Activated B cell treated with CpG ODN at 0.5 μM for 24 hours (primary cell): ENCODE measurements at regions of chr5 and their contacts with region 1.

Region 1: DNA sequence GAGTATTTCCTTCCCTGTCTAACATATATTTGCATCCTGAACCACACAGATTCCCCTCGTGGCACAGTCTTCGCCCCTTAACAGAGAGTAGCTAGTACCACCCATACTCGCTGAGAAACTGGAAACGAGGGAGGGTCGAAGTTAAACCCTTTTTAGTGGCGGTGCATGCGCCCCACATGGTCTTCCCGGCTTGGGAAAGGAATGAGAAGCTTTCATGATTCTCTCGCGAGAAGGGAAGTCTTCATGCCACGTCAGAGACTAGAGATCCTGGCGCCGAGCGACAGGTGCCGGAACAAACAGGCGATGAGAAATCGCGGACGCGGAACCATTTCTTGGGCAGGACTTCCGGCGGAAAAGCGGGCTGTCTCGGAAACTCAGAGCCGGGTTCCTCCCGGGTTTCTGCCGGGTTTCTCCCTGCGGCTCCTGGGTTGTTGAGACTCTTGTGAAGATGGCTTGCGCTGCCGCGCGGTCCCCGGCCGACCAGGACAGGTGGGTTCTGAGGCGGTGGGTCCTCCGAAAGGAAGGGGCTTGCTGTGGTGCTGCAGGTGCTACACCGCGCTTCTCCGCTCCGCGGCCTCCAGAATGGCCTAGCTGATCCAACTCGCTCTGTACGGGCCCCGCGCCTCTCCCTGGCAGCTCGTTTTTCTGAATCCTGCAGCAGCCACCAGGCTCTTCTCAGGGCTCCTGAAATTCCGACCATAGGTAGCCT is at the start of gene SRP19:
- DNase-seq: peak; percentile 83
- ATAC-seq: peak; percentile 94
- H3K4me3 Mint-ChIP-seq: peak within 1 kb of the TSS; percentile 96
- H3K27ac Mint-ChIP-seq: peak within 1 kb of the TSS; percentile 96
- H3K4me1 Mint-ChIP-seq: peaks cover 34% of the 10 kb centered on the region
- H3K27me3 Mint-ChIP-seq: peaks cover 4% of the 10 kb centered on the region
- CTCF ChIP-seq: no peak
- total RNA-seq, gene SRP19: 50.4 and 51.6 TPM in 2 replicates

Region 2: GRCh38 chr5:111092062-111092853 is 1768.8 kb before region 1 on chr5 and contains the start of gene WDR36:
- CTCF ChIA-PET with region 1: no interaction called
- POLR2A ChIA-PET with region 1: no interaction called
- intact Hi-C with region 1: loop called (anchors 1 kb)
- DNase-seq: peak; percentile 88
- ATAC-seq: peak; percentile 95
- H3K4me3 Mint-ChIP-seq: peak within 1 kb of the TSS; percentile 96
- H3K27ac Mint-ChIP-seq: peak within 1 kb of the TSS; percentile 90
- H3K4me1 Mint-ChIP-seq: peaks cover 31% of the 10 kb centered on the region
- H3K27me3 Mint-ChIP-seq: peaks cover 6% of the 10 kb centered on the region
- CTCF ChIP-seq: no peak
- total RNA-seq, gene WDR36: 42.6 and 48.6 TPM in 2 replicates

Region 3: GRCh38 chr5:112848116-112848811 is 12.8 kb before region 1 on chr5:
- CTCF ChIA-PET with region 1: interaction called, 10 read pairs
- POLR2A ChIA-PET with region 1: interaction called, 16 read pairs
- intact Hi-C with region 1: loop called (anchors 1 kb)
- DNase-seq: no peak
- ATAC-seq: peak; percentile 100
- H3K4me3 Mint-ChIP-seq: peak overlapping the region; percentile 1
- H3K27ac Mint-ChIP-seq: peak overlapping the region; percentile 64
- H3K4me1 Mint-ChIP-seq: peaks cover 8% of the 10 kb centered on the region
- H3K27me3 Mint-ChIP-seq: no peaks in the 10 kb centered on the region
- CTCF ChIP-seq: no peak

Region 4: DNA sequence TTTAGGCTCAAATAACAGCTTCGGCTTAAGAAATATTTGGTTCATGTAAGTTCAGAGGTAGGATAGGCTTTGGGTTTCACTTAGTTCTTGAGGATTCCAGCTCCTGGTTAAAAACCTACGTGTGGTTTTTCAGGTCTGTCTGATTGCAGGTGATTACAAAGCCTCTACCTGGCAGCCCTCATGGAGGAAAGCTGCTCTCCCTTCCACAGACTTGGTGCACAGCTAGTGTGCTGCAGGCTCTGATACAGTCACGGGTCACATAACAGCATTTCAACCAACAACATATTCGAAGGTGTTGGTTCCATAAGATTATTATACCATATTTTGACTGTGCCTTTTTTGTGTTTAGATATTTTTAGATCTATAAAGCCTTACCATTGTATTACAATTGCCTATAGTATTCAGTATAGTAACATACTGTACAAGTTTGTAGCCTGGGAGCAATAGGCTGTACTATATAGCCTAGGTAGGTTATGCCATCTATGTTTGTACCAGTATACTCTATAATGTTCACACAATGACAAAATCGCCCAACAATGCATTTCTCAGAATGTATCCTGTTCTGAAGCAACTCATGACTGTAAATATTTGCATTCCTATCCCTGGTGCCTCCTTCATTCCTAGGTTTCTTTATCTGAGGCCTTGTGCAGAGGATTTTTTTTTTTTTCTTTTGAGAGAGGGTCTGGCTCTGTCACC is 107.5 kb after region 1 on chr5:
- CTCF ChIA-PET with region 1: interaction called, 5 read pairs
- POLR2A ChIA-PET with region 1: no interaction called
- intact Hi-C with region 1: loop called (anchors 1 kb)
- DNase-seq: no peak
- ATAC-seq: no peak
- H3K4me3 Mint-ChIP-seq: no peak overlapping the region
- H3K27ac Mint-ChIP-seq: no peak overlapping the region
- H3K4me1 Mint-ChIP-seq: peaks cover 16% of the 10 kb centered on the region
- H3K27me3 Mint-ChIP-seq: no peaks in the 10 kb centered on the region
- CTCF ChIP-seq: no peak

Region 5: GRCh38 chr5:112976432-112977309 is 115.6 kb after region 1 on chr5 and contains the start of gene DCP2:
- CTCF ChIA-PET with region 1: no interaction called
- POLR2A ChIA-PET with region 1: interaction called, 23 read pairs
- intact Hi-C with region 1: loop called (anchors 1 kb)
- DNase-seq: peak; percentile 93
- ATAC-seq: peak; percentile 98
- H3K4me3 Mint-ChIP-seq: peak within 1 kb of the TSS; percentile 100
- H3K27ac Mint-ChIP-seq: peak within 1 kb of the TSS; percentile 96
- H3K4me1 Mint-ChIP-seq: peaks cover 53% of the 10 kb centered on the region
- H3K27me3 Mint-ChIP-seq: no peaks in the 10 kb centered on the region
- CTCF ChIP-seq: no peak
- total RNA-seq, gene DCP2: 53.5 and 56.0 TPM in 2 replicates

Region 6: DNA sequence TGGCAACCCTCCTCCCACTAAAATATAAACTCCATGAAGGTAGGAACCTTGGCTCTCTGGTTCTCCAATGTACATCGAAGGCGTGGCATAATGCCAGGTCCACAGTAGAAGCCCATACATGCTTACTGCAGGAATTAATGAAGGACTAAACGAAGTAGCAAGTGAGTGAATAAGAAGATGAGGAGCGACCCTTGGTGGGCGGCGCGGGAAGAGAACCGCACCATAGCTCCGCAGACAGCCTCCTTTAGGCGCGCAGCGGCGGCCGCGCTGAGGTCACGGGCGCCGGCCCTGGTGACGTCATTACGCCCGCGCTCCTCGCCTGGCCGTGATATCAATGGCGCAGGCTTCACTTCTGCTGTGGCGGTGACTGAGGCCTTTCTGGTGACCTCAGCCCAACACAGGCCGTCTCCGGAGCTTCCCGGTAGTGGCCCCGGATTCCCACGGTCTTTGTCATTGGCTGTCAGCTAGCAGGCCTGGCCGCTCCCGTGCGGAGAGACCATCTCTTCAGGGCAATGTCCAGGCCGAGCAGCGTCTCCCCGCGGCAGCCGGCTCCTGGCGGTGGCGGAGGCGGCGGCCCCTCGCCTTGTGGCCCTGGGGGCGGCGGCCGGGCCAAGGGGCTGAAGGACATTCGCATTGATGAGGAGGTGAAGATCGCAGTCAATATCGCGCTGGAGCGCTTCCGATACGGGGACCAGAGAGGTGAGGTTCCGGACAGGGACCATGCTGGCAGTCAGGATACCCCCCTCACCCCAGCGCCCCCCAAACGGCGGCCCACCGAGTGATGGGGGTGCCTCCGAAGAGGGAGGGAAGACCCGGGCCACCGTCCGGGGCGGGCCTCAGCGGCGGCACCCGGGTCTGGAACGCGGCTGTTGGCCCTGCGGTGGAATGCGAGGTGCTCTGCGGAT is 652.6 kb after region 1 on chr5 and contains the start of gene YTHDC2:
- CTCF ChIA-PET with region 1: no interaction called
- POLR2A ChIA-PET with region 1: no interaction called
- intact Hi-C with region 1: loop called (anchors 2 kb)
- DNase-seq: peak; percentile 86
- ATAC-seq: peak; percentile 98
- H3K4me3 Mint-ChIP-seq: peak within 1 kb of the TSS; percentile 92
- H3K27ac Mint-ChIP-seq: peak within 1 kb of the TSS; percentile 87
- H3K4me1 Mint-ChIP-seq: peaks cover 28% of the 10 kb centered on the region
- H3K27me3 Mint-ChIP-seq: peaks cover 12% of the 10 kb centered on the region
- CTCF ChIP-seq: no peak
- total RNA-seq, gene YTHDC2: 41.7 and 44.8 TPM in 2 replicates